HepG2 (cell line): ENCODE measurements at regions of chr14 and their contacts with region 1.

Region 1: DNA sequence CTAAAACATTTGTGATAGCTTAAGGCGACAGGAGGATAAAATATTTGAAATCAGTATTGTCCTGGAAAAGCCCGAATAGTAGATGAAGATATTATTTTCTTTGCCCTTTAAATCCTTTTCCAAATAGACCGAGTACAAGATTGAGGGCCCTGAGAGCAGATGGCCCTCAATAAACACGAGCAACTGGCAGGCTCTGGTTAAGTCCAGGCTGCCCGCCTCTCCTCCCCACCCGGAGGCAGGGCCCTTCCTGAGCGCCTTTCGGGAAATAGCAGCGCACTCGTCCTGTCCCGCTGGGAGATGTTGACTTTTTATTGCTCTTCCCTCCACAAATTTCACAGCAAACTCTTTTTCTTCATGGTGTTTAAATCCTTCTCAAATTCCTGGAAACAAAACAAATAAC is 50.8 kb upstream of the MAX start:
- DNase-seq: no peak
- ATAC-seq: 0 out of 3 replicates have a peak, but pooled peaks have one; percentile 40
- H3K4me3 ChIP-seq: no peak overlapping the region
- H3K27ac ChIP-seq: no peak overlapping the region
- H3K4me1 ChIP-seq: no peaks in the 10 kb centered on the region
- H3K27me3 ChIP-seq: peaks cover 2 to 9% of the 10 kb centered on the region in 2 experiments; a peak in 3 of 5 replicates
- CTCF ChIP-seq: no peak
- EP300 ChIP-seq: no peak
- POLR2A ChIP-seq: no peak
- RAD21 ChIP-seq: no peak

Region 2: GRCh38 chr14:65131301-65131701 is 21.8 kb before region 1 on chr14:
- CTCF ChIA-PET with region 1: no interaction called
- POLR2A ChIA-PET with region 1: no interaction called
- in situ Hi-C with region 1: no loop called
- intact Hi-C with region 1: no loop called
- DNase-seq: no peak
- ATAC-seq: no peak
- H3K4me3 ChIP-seq: no peak overlapping the region
- H3K27ac ChIP-seq: no peak overlapping the region
- H3K4me1 ChIP-seq: peaks cover 29% of the 10 kb centered on the region
- H3K27me3 ChIP-seq: no peaks in the 10 kb centered on the region
- CTCF ChIP-seq: no peak
- EP300 ChIP-seq: no peak
- POLR2A ChIP-seq: no peak
- RAD21 ChIP-seq: no peak

Region 3: DNA sequence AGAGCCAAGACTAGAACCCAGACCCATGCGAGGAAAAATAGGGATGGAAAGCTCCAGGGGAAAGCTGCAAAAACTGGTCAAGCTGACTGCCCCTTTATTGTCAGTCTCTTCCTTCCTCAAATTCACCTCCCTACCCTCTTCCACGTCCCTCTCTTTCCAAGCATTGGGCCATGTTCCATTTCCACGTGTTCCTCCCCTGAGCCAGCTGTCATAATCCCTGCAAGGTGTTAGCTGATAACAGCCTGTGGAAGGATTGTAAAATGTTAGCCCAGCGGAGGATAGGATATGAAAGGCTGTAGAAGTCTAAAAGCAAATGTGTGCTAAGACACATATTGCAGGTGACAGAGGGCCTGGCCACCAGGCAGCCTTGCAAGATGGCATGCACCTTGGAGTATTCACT is 37.2 kb after region 1 on chr14:
- CTCF ChIA-PET with region 1: no interaction called
- POLR2A ChIA-PET with region 1: no interaction called
- in situ Hi-C with region 1: no loop called
- intact Hi-C with region 1: loop called (anchors 2 kb)
- DNase-seq: no peak
- ATAC-seq: no peak
- H3K4me3 ChIP-seq: no peak overlapping the region
- H3K27ac ChIP-seq: no peak overlapping the region
- H3K4me1 ChIP-seq: peaks cover 23% of the 10 kb centered on the region
- H3K27me3 ChIP-seq: peaks cover 1 to 21% of the 10 kb centered on the region in 2 experiments; a peak in 3 of 5 replicates
- CTCF ChIP-seq: no peak
- EP300 ChIP-seq: no peak
- POLR2A ChIP-seq: no peak
- RAD21 ChIP-seq: no peak